MCF 10A (cell line): ENCODE measurements at regions of chr5 and their contacts with region 1.

Region 1: GRCh38 chr5:54387659-54388232 is 67.8 kb upstream of the HSPB3 start:
- DNase-seq: no peak
- H3K4me3 Mint-ChIP-seq: no peak overlapping the region
- H3K27ac Mint-ChIP-seq: no peak overlapping the region
- H3K4me1 Mint-ChIP-seq: peaks cover 20% of the 10 kb centered on the region
- H3K27me3 Mint-ChIP-seq: no peaks in the 10 kb centered on the region
- CTCF ChIP-seq: no peak

Region 2: GRCh38 chr5:54401515-54401914 is 13.8 kb after region 1 on chr5:
- CTCF ChIA-PET with region 1: interaction called, 7 read pairs
- POLR2A ChIA-PET with region 1: interaction called, 11 read pairs
- intact Hi-C with region 1: no loop called
- DNase-seq: no peak
- H3K4me3 Mint-ChIP-seq: no peak overlapping the region
- H3K27ac Mint-ChIP-seq: no peak overlapping the region
- H3K4me1 Mint-ChIP-seq: peaks cover 21% of the 10 kb centered on the region
- H3K27me3 Mint-ChIP-seq: no peaks in the 10 kb centered on the region
- CTCF ChIP-seq: no peak